Natural killer cell (primary cell): ENCODE measurements at regions of chr1 and their contacts with region 1.

Region 1: GRCh38 chr1:156193488-156194299 is at the start of gene SLC25A44:
- DNase-seq: peak; percentile 95 to 99
- ATAC-seq: peak; percentile 97 to 100 (median 98)
- H3K4me3 ChIP-seq: peak within 1 kb of the TSS; percentile 93
- H3K4me3 Mint-ChIP-seq: peak within 1 kb of the TSS; percentile 99
- H3K27ac ChIP-seq: peak within 1 kb of the TSS; percentile 82
- H3K27ac Mint-ChIP-seq: peak within 1 kb of the TSS; percentile 94 to 97
- H3K4me1 ChIP-seq: peaks cover 23% of the 10 kb centered on the region
- H3K4me1 Mint-ChIP-seq: peaks cover 37 to 43% of the 10 kb centered on the region in 2 donors
- H3K27me3 ChIP-seq: no peaks in the 10 kb centered on the region
- H3K27me3 Mint-ChIP-seq: no peaks in the 10 kb centered on the region
- CTCF ChIP-seq: peak; percentile 5
- total RNA-seq, gene SLC25A44: 17.1 to 49.2 (median 22.0) TPM

Region 2: DNA sequence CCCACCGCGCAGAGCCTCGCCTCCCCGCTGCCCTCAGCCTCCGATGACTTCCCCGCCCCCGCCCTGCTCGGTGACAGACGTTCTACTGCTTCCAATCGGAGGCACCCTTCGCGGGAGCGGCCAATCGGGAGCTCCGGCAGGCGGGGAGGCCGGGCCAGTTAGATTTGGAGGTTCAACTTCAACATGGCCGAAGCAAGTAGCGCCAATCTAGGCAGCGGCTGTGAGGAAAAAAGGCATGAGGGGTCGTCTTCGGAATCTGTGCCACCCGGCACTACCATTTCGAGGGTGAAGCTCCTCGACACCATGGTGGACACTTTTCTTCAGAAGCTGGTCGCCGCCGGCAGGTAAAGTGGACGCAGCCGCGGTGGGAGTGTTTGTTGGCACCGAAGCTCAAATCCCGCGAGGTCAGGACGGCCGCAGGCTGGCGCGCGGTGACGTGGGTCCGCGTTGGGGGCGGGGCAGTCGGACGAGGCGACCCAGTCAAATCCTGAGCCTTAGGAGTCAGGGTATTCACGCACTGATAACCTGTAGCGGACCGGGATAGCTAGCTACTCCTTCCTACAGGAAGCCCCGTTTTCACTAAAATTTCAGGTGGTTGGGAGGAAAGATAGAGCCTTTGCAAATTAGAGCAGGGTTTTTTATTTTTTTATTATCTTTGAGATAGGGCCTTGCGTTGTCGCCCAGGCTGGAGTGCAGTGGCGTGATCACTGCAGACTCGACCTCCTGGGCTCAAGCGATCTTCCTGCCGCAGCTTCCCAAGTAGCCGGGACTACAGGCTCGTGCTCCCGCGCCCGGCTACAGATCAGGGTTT is 19.3 kb after region 1 on chr1 and contains the start of gene PMF1:
- intact Hi-C with region 1: loop called (anchors 1 kb)
- DNase-seq: peak; percentile 94 to 97
- ATAC-seq: peak; percentile 94 to 99 (median 96)
- H3K4me3 ChIP-seq: peak within 1 kb of the TSS; percentile 60
- H3K4me3 Mint-ChIP-seq: peak within 1 kb of the TSS; percentile 98
- H3K27ac ChIP-seq: peak within 1 kb of the TSS; percentile 85
- H3K27ac Mint-ChIP-seq: peak within 1 kb of the TSS; percentile 99
- H3K4me1 ChIP-seq: peaks cover 25% of the 10 kb centered on the region
- H3K4me1 Mint-ChIP-seq: peaks cover 25 to 30% of the 10 kb centered on the region in 2 donors
- H3K27me3 ChIP-seq: no peaks in the 10 kb centered on the region
- H3K27me3 Mint-ChIP-seq: no peaks in the 10 kb centered on the region
- CTCF ChIP-seq: no peak
- total RNA-seq, gene PMF1: 61.5 to 70.3 (median 64.0) TPM